ENCODE measurements at regions of chr19 and their contacts with region 1.

Region 1: GRCh38 chr19:15297416-15298224 is 34.7 kb downstream of the BRD4 start:
- DNase-seq: peak; percentile 17
- H3K4me3 Mint-ChIP-seq: peak overlapping the region; percentile 9
- H3K27ac Mint-ChIP-seq: peak overlapping the region; percentile 85
- H3K4me1 Mint-ChIP-seq: peaks cover 87% of the 10 kb centered on the region
- H3K27me3 Mint-ChIP-seq: no peaks in the 10 kb centered on the region

Region 2: GRCh38 chr19:14517840-14518505 is 779.6 kb before region 1 on chr19 and contains the start of gene DNAJB1:
- CTCF ChIA-PET with region 1: no interaction called
- POLR2A ChIA-PET with region 1: interaction called, 17 read pairs
- DNase-seq: peak; percentile 66
- H3K4me3 Mint-ChIP-seq: peak within 1 kb of the TSS; percentile 94
- H3K27ac Mint-ChIP-seq: peak within 1 kb of the TSS; percentile 98
- H3K4me1 Mint-ChIP-seq: peaks cover 66% of the 10 kb centered on the region
- H3K27me3 Mint-ChIP-seq: no peaks in the 10 kb centered on the region
- total RNA-seq, gene DNAJB1: 89.7 to 100 TPM

Region 3: GRCh38 chr19:15412832-15413231 is 115.2 kb after region 1 on chr19:
- CTCF ChIA-PET with region 1: no interaction called
- POLR2A ChIA-PET with region 1: no interaction called
- DNase-seq: no peak
- H3K4me3 Mint-ChIP-seq: no peak overlapping the region
- H3K27ac Mint-ChIP-seq: peak overlapping the region; percentile 6
- H3K4me1 Mint-ChIP-seq: peaks cover 39% of the 10 kb centered on the region
- H3K27me3 Mint-ChIP-seq: no peaks in the 10 kb centered on the region

Measured in activated CD4-positive, alpha-beta T cell treated with anti-CD3 and anti-CD28 coated beads, Interleukin-2, amount 10 ng/mL, durations not matched to agents 7 days and 5 days (primary cell).